KBM-7 (cell line): ENCODE measurements at regions of chr6 and their contacts with region 1.

Region 1: GRCh38 chr6:20534295-20535262 is at the start of gene CDKAL1:
- DNase-seq: peak; percentile 87

Region 2: GRCh38 chr6:20291764-20292580 is 242.6 kb before region 1 on chr6:
- in situ Hi-C with region 1: loop called (anchors 25 kb)
- DNase-seq: peak; percentile 84